Activated naive CD4-positive, alpha-beta T cell treated with anti-CD3 and anti-CD28 coated beads for 36 hours (primary cell): ENCODE measurements at regions of chr17 and their contacts with region 1.

Region 1: GRCh38 chr17:78708510-78708973 is 73.5 kb downstream of the CYTH1 start:
- DNase-seq: peak; percentile 77
- H3K4me3 Mint-ChIP-seq: peak overlapping the region; percentile 22
- H3K27ac Mint-ChIP-seq: peak overlapping the region; percentile 42
- H3K4me1 Mint-ChIP-seq: peaks cover 64% of the 10 kb centered on the region
- H3K27me3 Mint-ChIP-seq: no peaks in the 10 kb centered on the region

Region 2: GRCh38 chr17:78444392-78444791 is 264.1 kb before region 1 on chr17:
- CTCF ChIA-PET with region 1: interaction called, 10 read pairs
- intact Hi-C with region 1: no loop called
- DNase-seq: no peak
- H3K4me3 Mint-ChIP-seq: no peak overlapping the region
- H3K27ac Mint-ChIP-seq: no peak overlapping the region
- H3K4me1 Mint-ChIP-seq: no peaks in the 10 kb centered on the region
- H3K27me3 Mint-ChIP-seq: no peaks in the 10 kb centered on the region

Region 3: GRCh38 chr17:78665952-78666920 is 42.3 kb before region 1 on chr17:
- CTCF ChIA-PET with region 1: interaction called, 17 read pairs
- intact Hi-C with region 1: no loop called
- DNase-seq: peak; percentile 91
- H3K4me3 Mint-ChIP-seq: no peak overlapping the region
- H3K27ac Mint-ChIP-seq: peak overlapping the region; percentile 78
- H3K4me1 Mint-ChIP-seq: peaks cover 21% of the 10 kb centered on the region
- H3K27me3 Mint-ChIP-seq: no peaks in the 10 kb centered on the region

Region 4: GRCh38 chr17:78723001-78723796 is 14.7 kb after region 1 on chr17:
- CTCF ChIA-PET with region 1: interaction called, 18 read pairs
- intact Hi-C with region 1: no loop called
- DNase-seq: no peak
- H3K4me3 Mint-ChIP-seq: no peak overlapping the region
- H3K27ac Mint-ChIP-seq: peak overlapping the region; percentile 92
- H3K4me1 Mint-ChIP-seq: peaks cover 97% of the 10 kb centered on the region
- H3K27me3 Mint-ChIP-seq: no peaks in the 10 kb centered on the region

Region 5: DNA sequence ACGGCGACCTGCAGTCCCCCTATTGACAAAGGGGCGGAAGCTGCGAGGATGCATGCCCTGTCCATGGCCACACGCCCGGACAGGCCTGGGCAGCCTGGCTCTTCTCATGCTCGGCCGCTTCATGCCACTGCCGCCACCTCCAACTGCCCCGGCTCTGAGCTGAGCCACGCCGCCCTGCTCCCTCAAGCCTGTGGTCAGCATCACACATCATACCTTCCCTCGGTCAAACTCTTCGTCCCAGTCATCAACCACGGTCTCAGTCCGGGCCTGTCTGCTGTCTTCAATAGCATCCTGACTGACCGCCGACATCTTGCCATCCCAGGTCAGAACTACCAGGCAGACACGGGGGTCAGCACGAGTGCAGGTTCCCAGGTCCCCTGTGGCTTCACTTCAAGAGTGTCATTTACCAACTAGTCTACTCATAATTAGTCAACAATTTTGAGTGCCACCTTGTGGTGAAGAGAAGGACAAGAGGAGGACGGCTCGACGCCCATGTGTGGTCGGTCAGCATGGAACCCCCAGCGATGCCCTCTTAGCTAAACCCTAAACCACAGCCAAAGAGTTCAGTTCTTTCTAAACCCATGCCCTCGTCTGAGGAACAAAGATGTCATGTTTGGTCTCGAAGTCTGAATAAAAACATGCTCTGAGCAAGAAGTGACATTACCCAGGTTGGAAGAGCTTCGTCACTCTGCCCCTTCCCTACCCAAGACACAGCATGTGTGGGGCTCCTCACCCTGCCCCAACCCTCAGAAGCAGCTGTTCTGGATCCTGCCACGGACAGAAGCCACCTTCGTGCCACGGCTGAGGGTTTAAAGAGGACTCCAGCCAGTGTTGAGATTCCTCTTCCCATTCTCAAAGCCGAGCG is 90.4 kb after region 1 on chr17:
- CTCF ChIA-PET with region 1: interaction called, 3 read pairs
- intact Hi-C with region 1: loop called (anchors 1 kb)
- DNase-seq: peak; percentile 38
- H3K4me3 Mint-ChIP-seq: no peak overlapping the region
- H3K27ac Mint-ChIP-seq: peak overlapping the region; percentile 80
- H3K4me1 Mint-ChIP-seq: peaks cover 33% of the 10 kb centered on the region
- H3K27me3 Mint-ChIP-seq: no peaks in the 10 kb centered on the region